ENCODE measurements at regions of chr19 and their contacts with region 1.

Region 1: DNA sequence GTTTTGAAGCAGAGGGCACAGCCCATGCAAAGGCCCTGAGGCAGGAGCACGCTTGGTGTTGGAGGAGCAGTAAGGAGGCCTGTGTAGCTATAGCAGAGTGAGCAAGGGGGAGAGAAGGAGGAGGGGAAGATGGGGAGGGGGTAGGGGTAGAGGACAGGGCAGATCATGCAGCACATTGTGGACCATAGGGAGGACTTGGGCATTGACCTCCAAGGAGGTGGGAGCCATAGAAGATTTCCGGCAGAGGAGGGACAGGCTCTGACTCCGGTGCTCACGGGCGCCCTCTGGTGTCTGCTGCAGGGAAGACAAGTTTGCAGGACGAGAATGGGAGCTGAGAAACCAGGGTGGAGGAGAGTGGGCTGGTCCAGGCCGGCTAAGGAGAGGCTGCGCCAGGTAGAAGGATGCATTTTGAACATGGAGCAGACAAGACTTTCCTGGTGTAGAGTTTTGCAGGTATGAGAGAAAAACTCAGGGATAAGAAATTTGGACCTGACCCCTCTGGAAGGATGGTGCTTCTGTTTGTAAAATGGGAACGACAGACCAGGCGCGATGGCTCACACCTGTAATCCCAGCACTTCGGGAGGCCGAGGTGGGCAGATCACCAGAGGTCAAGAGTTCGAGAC is 13.7 kb upstream of the CREB3L3 start:
- DNase-seq: peak; percentile 21 to 99
- H3K4me3 ChIP-seq: no peak overlapping the region
- H3K27ac ChIP-seq: no peak overlapping the region
- H3K4me1 ChIP-seq: no peaks in the 10 kb centered on the region; a peak in 1 of 7 replicates
- H3K27me3 ChIP-seq: no peaks in the 10 kb centered on the region; a peak in 1 of 7 replicates
- CTCF ChIP-seq: peak; percentile 81 to 98 (median 93)
- EP300 ChIP-seq: no peak
- POLR2A ChIP-seq: no peak
- RAD21 ChIP-seq: peak; percentile 40 to 52

Region 2: DNA sequence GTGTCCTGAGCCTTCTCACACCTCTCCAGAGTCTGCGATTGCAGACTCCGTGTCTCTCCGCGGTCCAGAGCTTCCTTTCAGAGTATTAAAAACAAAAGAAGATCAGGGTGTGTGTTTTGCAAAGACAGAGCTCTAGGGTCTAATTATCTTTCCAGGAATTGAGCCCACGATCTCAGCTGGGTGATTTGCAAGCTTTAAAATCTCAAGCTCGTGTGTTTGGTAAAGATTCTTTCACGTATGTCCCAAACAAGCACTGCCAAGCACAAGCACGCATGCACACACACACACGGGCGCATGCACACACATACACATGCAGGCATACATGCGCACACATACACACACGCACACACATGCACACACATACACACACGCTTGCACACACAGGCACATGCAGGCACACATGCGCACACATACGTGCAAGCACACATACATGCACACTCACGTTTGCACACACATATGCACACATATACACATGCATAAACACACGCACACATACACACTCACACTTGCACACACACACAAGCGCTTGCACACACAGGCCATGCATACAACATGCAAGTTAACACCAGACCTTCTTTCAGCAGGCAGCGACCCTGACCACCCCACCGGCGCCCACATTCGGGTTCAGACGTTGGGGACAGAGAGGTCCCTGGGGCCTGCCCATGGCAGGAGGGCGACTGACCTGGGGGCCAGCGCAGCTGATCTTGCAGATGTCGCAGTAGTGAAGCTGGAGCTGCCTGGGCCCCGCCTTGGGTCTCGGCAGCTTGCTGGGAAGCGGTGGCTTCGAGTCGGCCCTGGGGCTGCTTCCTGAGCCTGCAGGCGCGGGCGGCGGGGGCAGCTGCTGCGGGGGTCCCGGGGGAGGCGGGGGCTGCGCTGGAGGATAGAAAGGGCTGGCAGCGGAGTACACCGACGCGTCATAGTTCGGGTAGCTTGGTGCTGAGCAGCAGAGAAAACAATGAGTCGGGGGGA is 308.8 kb before region 1 on chr19:
- CTCF ChIA-PET with region 1: no interaction called
- POLR2A ChIA-PET with region 1: no interaction called
- DNase-seq: no peak
- H3K4me3 ChIP-seq: no peak overlapping the region
- H3K27ac ChIP-seq: no peak overlapping the region
- H3K4me1 ChIP-seq: no peaks in the 10 kb centered on the region
- H3K27me3 ChIP-seq: no peaks in the 10 kb centered on the region; a peak in 1 of 7 replicates
- CTCF ChIP-seq: no peak
- EP300 ChIP-seq: no peak
- POLR2A ChIP-seq: no peak
- RAD21 ChIP-seq: no peak

Region 3: DNA sequence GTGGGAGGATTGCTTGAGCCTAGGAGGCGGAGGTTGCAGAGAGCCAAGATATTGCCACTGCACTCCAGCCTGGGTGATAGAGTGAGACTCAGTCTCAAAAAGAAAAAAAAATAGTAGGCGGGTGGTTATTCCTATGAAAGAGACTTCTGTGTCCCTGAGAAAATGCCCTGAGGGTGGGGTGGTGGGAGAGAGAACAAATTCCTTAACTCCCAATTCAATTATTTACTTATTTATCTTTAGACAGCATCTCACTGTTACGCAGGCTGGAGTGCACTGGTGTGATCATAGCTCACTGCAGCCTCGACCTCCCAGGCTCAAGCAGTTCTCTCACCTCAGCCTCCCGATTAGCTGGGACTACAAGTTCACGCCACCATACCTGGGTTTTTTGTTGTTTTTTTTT is 144.1 kb before region 1 on chr19:
- CTCF ChIA-PET with region 1: no interaction called
- POLR2A ChIA-PET with region 1: no interaction called
- DNase-seq: no peak
- H3K4me3 ChIP-seq: no peak overlapping the region
- H3K27ac ChIP-seq: no peak overlapping the region
- H3K4me1 ChIP-seq: no peaks in the 10 kb centered on the region
- H3K27me3 ChIP-seq: no peaks in the 10 kb centered on the region
- CTCF ChIP-seq: no peak
- EP300 ChIP-seq: no peak
- POLR2A ChIP-seq: no peak
- RAD21 ChIP-seq: no peak

Region 4: GRCh38 chr19:4083677-4084546 is 55.8 kb before region 1 on chr19:
- CTCF ChIA-PET with region 1: no interaction called
- POLR2A ChIA-PET with region 1: no interaction called
- DNase-seq: no peak
- H3K4me3 ChIP-seq: no peak overlapping the region
- H3K27ac ChIP-seq: no peak overlapping the region
- H3K4me1 ChIP-seq: peaks cover 0 to 5% (median 1%) of the 10 kb centered on the region in 4 experiments; a peak in 2 of 7 replicates
- H3K27me3 ChIP-seq: no peaks in the 10 kb centered on the region
- CTCF ChIP-seq: no peak
- EP300 ChIP-seq: no peak
- POLR2A ChIP-seq: no peak
- RAD21 ChIP-seq: no peak

Region 5: GRCh38 chr19:4097501-4097900 is 42.2 kb before region 1 on chr19:
- CTCF ChIA-PET with region 1: interaction called, 15 read pairs
- POLR2A ChIA-PET with region 1: no interaction called
- DNase-seq: no peak
- H3K4me3 ChIP-seq: no peak overlapping the region
- H3K27ac ChIP-seq: no peak overlapping the region
- H3K4me1 ChIP-seq: no peaks in the 10 kb centered on the region
- H3K27me3 ChIP-seq: no peaks in the 10 kb centered on the region
- CTCF ChIP-seq: no peak
- EP300 ChIP-seq: no peak
- POLR2A ChIP-seq: no peak
- RAD21 ChIP-seq: no peak

Region 6: GRCh38 chr19:4115050-4115817 is 24.5 kb before region 1 on chr19:
- CTCF ChIA-PET with region 1: interaction called, 42 read pairs
- POLR2A ChIA-PET with region 1: no interaction called
- DNase-seq: no peak
- H3K4me3 ChIP-seq: no peak overlapping the region
- H3K27ac ChIP-seq: no peak overlapping the region
- H3K4me1 ChIP-seq: no peaks in the 10 kb centered on the region; a peak in 1 of 7 replicates
- H3K27me3 ChIP-seq: no peaks in the 10 kb centered on the region
- CTCF ChIP-seq: no peak
- EP300 ChIP-seq: no peak
- POLR2A ChIP-seq: no peak
- RAD21 ChIP-seq: no peak

Region 7: GRCh38 chr19:4157164-4157563 is 17.4 kb after region 1 on chr19:
- CTCF ChIA-PET with region 1: interaction called, 79 read pairs
- POLR2A ChIA-PET with region 1: no interaction called
- DNase-seq: no peak
- H3K4me3 ChIP-seq: no peak overlapping the region
- H3K27ac ChIP-seq: no peak overlapping the region
- H3K4me1 ChIP-seq: no peaks in the 10 kb centered on the region; a peak in 1 of 7 replicates
- H3K27me3 ChIP-seq: no peaks in the 10 kb centered on the region; a peak in 1 of 7 replicates
- CTCF ChIP-seq: no peak
- EP300 ChIP-seq: no peak
- POLR2A ChIP-seq: no peak
- RAD21 ChIP-seq: no peak

Region 8: GRCh38 chr19:4172861-4173473 is 33.2 kb after region 1 on chr19:
- CTCF ChIA-PET with region 1: interaction called, 21 read pairs
- POLR2A ChIA-PET with region 1: no interaction called
- DNase-seq: peak in 1 of 2 experiments; percentile 98
- H3K4me3 ChIP-seq: peak overlapping the region in 3 of 4 experiments; percentile 13 to 32 (median 23); a peak in 5 of 8 replicates
- H3K27ac ChIP-seq: no peak overlapping the region
- H3K4me1 ChIP-seq: peaks cover 0 to 2% (median 0%) of the 10 kb centered on the region in 4 experiments; a peak in 1 of 7 replicates
- H3K27me3 ChIP-seq: peaks cover 0 to 19% (median 6%) of the 10 kb centered on the region in 4 experiments; a peak in 6 of 7 replicates
- CTCF ChIP-seq: no peak
- EP300 ChIP-seq: no peak
- POLR2A ChIP-seq: no peak
- RAD21 ChIP-seq: no peak

Region 9: GRCh38 chr19:4197625-4198466 is 58.1 kb after region 1 on chr19:
- CTCF ChIA-PET with region 1: interaction called, 43 read pairs
- POLR2A ChIA-PET with region 1: no interaction called
- DNase-seq: peak in 1 of 2 experiments; percentile 80
- H3K4me3 ChIP-seq: peak overlapping the region; percentile 23 to 87 (median 47); a peak in 7 of 8 replicates
- H3K27ac ChIP-seq: no peak overlapping the region
- H3K4me1 ChIP-seq: peaks cover 0 to 2% (median 0%) of the 10 kb centered on the region in 4 experiments; a peak in 3 of 7 replicates
- H3K27me3 ChIP-seq: peaks cover 0 to 7% (median 3%) of the 10 kb centered on the region in 4 experiments; a peak in 2 of 7 replicates
- CTCF ChIP-seq: no peak
- EP300 ChIP-seq: no peak; a peak in 1 of 3 replicates
- POLR2A ChIP-seq: no peak
- RAD21 ChIP-seq: no peak

Measured in H1 (cell line).